Mammary epithelial cell (primary cell): ENCODE measurements at regions of chr11 and their contacts with region 1.

Region 1: GRCh38 chr11:86160546-86161149 is 83.9 kb upstream of the EED start:
- DNase-seq: peak; percentile 93
- H3K4me3 ChIP-seq: no peak overlapping the region
- H3K27ac ChIP-seq: peak overlapping the region; percentile 65
- H3K4me1 ChIP-seq: peaks cover 58% of the 10 kb centered on the region
- H3K27me3 ChIP-seq: no peaks in the 10 kb centered on the region
- CTCF ChIP-seq: no peak

Region 2: DNA sequence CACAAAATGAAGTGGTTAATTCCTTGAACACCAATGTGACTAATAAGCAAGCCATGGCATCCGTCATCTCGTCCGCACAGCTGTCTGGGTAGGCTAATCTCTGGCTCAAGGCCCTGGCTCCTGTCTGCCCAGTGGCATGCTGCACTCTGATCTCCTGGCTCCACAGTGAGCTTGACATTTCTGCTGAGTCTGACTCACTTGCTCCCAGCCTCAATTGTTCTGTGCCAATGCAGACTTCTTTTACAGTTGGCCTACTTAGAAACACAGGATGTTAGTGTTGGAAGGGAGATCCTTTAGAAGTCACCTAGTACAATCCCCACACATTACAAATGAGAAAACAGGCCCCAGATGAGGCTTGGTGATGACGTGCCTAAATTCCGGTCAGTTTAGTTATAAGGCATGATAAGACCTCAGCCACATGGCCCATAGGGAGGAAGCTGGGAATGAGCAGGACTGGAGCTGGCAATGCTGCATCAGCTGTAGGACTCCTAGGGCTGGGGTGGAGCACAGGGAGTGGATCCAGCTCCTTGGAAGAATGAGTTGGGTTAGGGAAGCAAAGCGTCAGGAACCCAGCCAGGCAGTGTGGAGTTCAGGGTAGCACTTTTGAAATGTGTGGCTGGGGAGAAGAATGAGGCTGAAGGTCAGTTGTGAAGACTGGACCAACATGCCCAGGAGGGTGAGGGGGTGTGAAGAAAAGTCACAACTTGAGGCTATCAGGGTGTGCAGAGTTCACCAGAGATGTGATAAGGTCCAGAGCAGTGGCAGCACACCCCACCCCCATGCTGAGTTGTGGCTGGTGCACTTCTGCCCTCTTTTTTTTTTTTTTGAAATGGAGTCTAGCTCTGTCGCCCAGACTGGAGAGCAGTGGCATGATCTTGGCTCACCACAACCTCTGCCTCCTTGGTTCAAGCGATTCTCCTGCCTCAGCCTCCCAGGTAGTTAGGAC is 13.7 kb after region 1 on chr11:
- CTCF ChIA-PET with region 1: no interaction called
- dilution Hi-C with region 1: no loop called
- in situ Hi-C with region 1: no loop called
- intact Hi-C with region 1: loop called (anchors 1 kb)
- DNase-seq: peak; percentile 97
- H3K4me3 ChIP-seq: no peak overlapping the region
- H3K27ac ChIP-seq: peak overlapping the region; percentile 86
- H3K4me1 ChIP-seq: peaks cover 36% of the 10 kb centered on the region
- H3K27me3 ChIP-seq: no peaks in the 10 kb centered on the region
- CTCF ChIP-seq: no peak

Region 3: DNA sequence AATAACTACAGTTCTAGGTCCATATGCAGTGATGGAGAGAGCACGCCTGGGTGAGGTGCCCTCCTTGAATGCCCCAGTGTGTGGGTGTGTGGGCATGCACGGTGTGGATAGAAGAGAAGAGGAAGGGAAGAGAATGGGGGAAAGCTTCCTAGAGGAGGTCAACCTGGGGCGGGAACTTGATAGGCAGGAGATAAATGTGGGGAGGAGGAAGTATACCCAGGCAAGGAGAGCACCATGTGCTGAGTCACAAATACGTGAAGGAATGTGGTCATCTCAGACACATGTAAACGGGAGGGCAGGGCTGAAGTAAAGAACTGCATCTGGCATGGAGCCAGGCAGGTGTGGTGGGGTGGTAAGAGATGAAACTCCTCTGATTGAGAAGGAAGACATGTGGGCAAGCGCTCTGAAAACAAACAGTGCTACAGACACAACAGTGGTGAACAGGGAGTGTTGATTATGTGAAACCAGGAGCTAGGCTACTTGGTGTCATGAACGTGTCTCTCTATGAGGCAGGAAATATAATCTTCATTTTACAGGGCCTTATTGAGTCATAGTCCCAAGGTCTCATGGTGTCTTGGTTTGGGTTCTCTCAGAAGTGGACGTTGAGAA is 22.4 kb after region 1 on chr11:
- CTCF ChIA-PET with region 1: no interaction called
- dilution Hi-C with region 1: no loop called
- in situ Hi-C with region 1: no loop called
- intact Hi-C with region 1: loop called (anchors 2 kb)
- DNase-seq: peak; percentile 95
- H3K4me3 ChIP-seq: no peak overlapping the region
- H3K27ac ChIP-seq: peak overlapping the region; percentile 87
- H3K4me1 ChIP-seq: peaks cover 19% of the 10 kb centered on the region
- H3K27me3 ChIP-seq: no peaks in the 10 kb centered on the region
- CTCF ChIP-seq: no peak